Astrocyte of the cerebellum (primary cell): ENCODE measurements at regions of chr3 and their contacts with region 1.

Region 1: DNA sequence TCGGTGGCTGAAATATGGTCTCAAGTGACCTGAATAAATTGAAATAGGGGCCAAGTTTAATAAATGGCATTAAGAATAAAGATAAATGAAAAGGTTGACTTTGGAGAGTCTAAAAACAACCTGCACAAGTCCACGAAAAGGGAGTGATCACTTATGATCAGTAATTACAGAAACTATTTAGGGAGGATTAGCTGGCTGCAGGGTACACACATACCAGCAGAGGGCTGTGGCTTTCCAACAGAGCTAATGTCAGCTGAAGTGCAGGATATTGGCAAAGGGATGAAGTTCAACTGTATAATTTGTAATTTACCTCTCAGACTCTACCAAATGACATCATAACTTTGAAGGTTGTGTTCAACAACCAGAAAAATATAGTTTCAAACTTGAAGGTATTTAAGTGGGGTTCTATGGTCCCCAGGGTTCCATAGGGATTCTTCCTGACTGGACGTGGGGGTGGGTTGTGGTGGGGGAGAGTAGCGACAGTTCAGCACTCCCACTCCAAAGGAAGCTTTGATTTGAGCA is 86.9 kb downstream of the SYNPR start:
- DNase-seq: no peak
- H3K4me3 ChIP-seq: no peak overlapping the region
- CTCF ChIP-seq: peak; percentile 35

Region 2: DNA sequence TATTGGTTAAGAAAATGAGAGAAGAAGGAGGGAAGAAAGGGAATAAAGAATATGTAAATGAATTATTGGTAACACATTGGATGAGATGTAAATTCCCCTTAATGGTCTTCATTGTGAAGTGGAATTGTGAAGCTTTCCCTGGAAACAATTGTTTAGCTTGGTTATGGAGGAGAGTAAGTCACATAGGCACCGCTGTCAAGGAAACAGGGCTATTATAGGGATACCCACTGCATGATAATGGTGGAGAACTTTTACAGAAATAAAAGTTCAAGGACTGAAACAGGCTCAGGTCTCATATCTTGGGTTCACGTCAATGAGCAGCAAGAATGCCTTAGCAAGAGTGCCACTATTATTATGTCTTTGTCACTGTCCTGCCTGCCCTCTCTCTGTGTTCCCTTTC is 77.3 kb before region 1 on chr3:
- in situ Hi-C with region 1: no loop called
- DNase-seq: no peak
- H3K4me3 ChIP-seq: no peak overlapping the region
- CTCF ChIP-seq: no peak

Region 3: GRCh38 chr3:63429905-63430304 is 64.9 kb after region 1 on chr3:
- in situ Hi-C with region 1: loop called (anchors 10 kb)
- DNase-seq: no peak
- H3K4me3 ChIP-seq: no peak overlapping the region
- CTCF ChIP-seq: no peak

Region 4: DNA sequence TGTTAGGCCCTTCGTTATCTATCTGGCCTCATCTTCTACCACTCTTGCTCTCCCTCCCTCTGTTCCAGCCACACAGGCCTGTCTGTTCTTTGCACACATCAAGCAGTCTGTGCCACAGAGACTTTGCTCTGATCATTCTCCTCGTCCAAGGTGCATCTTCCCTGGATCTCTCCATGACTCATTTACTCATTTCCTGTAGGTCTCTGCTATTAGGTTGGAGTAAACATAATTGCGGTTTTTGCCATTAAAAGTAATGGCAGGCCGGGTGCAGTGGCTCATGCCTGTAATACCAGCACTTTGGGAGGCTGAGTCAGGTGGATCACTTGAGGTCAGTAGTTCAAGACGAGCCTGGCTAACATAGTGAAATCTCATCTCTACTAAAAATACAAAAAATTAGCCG is 444.6 kb after region 1 on chr3:
- in situ Hi-C with region 1: loop called (anchors 10 kb)
- DNase-seq: no peak
- H3K4me3 ChIP-seq: no peak overlapping the region
- CTCF ChIP-seq: no peak

Region 5: DNA sequence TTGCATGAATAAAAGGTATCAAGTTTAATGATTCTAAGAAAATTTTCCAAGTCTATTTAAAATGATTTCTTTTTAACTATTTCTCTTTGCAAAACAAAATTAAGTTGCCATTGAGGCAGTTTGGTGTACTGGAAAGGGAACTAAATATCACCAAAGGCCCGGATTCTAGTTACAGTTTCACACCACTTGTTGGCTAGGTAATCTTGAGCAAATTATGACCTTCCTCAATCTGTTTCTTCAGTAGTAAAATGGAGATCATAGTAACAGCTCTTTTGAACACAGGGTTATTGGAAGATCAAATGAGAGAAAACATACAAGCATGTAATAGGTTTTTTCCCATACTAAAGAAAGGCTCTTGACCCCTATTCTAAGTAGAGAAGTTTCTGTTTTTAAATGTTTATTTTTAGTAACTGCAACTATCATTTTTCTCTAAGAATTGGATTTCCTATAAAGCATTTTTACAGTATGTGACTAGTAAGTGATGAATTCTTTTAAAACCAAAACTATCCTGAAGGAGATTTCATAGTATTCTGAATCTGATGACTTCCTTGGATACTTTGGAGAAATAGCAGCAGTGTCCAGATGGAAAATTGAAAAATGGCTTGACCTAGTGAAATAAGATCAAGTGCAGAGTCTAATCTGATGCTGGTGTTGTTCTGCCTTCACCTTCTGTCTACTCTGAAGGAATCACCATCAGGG is 531.5 kb after region 1 on chr3:
- in situ Hi-C with region 1: no loop called
- DNase-seq: no peak
- H3K4me3 ChIP-seq: no peak overlapping the region
- CTCF ChIP-seq: no peak